WTC11 (cell line): ENCODE measurements at regions of chr19 and their contacts with region 1.

Region 1: GRCh38 chr19:32676186-32676894 is 692 bp downstream of the RGS9BP start:
- DNase-seq: peak; percentile 55
- ATAC-seq: no peak
- H3K4me3 Mint-ChIP-seq: peak overlapping the region; percentile 66
- H3K27ac Mint-ChIP-seq: no peak overlapping the region
- H3K4me1 Mint-ChIP-seq: peaks cover 23% of the 10 kb centered on the region
- H3K27me3 Mint-ChIP-seq: peaks cover 41% of the 10 kb centered on the region
- CTCF ChIP-seq: no peak

Region 2: DNA sequence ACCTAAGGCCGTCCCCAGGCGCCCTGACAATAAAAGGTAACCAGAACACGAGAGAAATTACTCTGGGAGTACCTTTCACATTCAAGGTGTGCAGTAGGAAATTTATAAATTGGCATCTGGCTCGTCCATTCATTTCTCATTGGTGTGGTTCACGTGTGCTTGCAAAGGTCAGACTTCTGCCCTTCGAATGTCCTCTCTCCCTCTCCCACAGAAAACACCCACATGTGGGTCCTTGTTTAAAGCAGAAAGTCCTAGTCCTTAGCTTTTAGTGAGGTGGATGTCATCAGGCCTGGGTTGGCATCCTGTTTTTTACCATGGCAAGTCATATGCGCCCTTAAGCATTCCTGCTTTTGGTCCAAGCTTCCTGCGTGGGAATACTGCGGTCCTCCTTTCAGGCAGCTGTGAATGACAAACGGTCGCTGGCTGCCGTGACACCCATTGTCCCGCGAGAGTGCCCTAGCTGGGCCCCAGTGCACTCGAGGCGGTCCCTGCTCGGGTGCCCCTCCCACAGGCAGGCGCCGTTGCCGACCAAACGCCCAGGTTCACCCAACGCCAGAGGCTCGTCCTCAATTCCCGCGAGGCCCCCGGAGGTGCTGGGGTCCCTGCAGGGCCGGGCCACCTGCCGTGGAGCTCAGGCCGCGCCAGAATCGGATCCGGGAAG is 15.1 kb after region 1 on chr19 and contains the start of gene NUDT19:
- CTCF ChIA-PET with region 1: interaction called, 15 read pairs
- POLR2A ChIA-PET with region 1: interaction called, 4 read pairs
- DNase-seq: peak; percentile 58
- ATAC-seq: peak; percentile 68
- H3K4me3 Mint-ChIP-seq: peak within 1 kb of the TSS; percentile 59
- H3K27ac Mint-ChIP-seq: no peak within 1 kb of the TSS
- H3K4me1 Mint-ChIP-seq: peaks cover 9% of the 10 kb centered on the region
- H3K27me3 Mint-ChIP-seq: peaks cover 33% of the 10 kb centered on the region
- CTCF ChIP-seq: no peak
- total RNA-seq, gene NUDT19: 2.4 to 3.0 TPM (median 2.7 TPM) in 3 replicates